ENCODE measurements at regions of chr18 and their contacts with region 1.

Region 1: GRCh38 chr18:55234366-55235093 is 275.3 kb upstream of the CCDC68 start:
- DNase-seq: peak; percentile 67 to 86 (median 80)
- H3K4me3 ChIP-seq: no peak overlapping the region
- H3K27ac ChIP-seq: no peak overlapping the region
- H3K4me1 ChIP-seq: peaks cover 2% of the 10 kb centered on the region
- H3K27me3 ChIP-seq: no peaks in the 10 kb centered on the region
- CTCF ChIP-seq: peak; percentile 41 to 80 (median 68)
- EP300 ChIP-seq: no peak
- POLR2A ChIP-seq: no peak

Region 2: GRCh38 chr18:55415258-55415871 is 180.8 kb after region 1 on chr18:
- intact Hi-C with region 1: loop called in 2 of 4 experiments (anchors 10 kb)
- DNase-seq: peak; percentile 83 to 93 (median 92)
- H3K4me3 ChIP-seq: no peak overlapping the region
- H3K27ac ChIP-seq: no peak overlapping the region
- H3K4me1 ChIP-seq: peaks cover 2% of the 10 kb centered on the region
- H3K27me3 ChIP-seq: no peaks in the 10 kb centered on the region
- CTCF ChIP-seq: peak; percentile 57 to 89 (median 78)
- EP300 ChIP-seq: no peak
- POLR2A ChIP-seq: no peak

Region 3: DNA sequence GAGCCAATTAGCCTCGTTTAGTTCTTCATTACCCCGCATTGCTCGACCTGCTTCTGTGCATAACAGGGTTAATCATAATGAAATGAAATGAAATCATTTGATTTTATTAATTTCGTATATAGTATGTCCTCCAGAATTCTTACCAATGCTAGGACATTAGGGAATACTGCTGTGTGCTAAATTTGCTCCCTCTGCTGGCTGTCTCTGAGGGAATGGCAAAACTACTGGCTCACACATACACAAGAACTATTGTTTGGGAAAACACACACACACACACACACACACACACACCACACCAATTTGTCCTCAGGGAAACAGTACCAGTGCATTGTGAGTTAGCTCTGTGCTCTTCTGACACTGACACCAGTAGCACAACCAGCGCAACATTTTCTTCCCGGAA is 626.7 kb after region 1 on chr18:
- intact Hi-C with region 1: loop called in 1 of 4 experiments (anchors 10 kb)
- DNase-seq: no peak
- H3K4me3 ChIP-seq: no peak overlapping the region
- H3K27ac ChIP-seq: no peak overlapping the region
- H3K4me1 ChIP-seq: peaks cover 4% of the 10 kb centered on the region
- H3K27me3 ChIP-seq: no peaks in the 10 kb centered on the region
- CTCF ChIP-seq: no peak
- EP300 ChIP-seq: no peak
- POLR2A ChIP-seq: no peak

Measured in ovary (tissue), 10 donors.